ENCODE measurements at regions of chr6 and their contacts with region 1.

Region 1: GRCh38 chr6:160455541-160456213 is 107.5 kb downstream of the SLC22A3 start:
- DNase-seq: peak; percentile 67
- CTCF ChIP-seq: peak; percentile 93

Region 2: GRCh38 chr6:160088069-160088783 is 367.5 kb before region 1 on chr6:
- CTCF ChIA-PET with region 1: interaction called, 14 read pairs
- POLR2A ChIA-PET with region 1: no interaction called
- DNase-seq: no peak
- CTCF ChIP-seq: peak; percentile 34

Region 3: GRCh38 chr6:160137989-160138835 is 317.5 kb before region 1 on chr6:
- CTCF ChIA-PET with region 1: interaction called, 49 read pairs
- POLR2A ChIA-PET with region 1: no interaction called
- DNase-seq: peak; percentile 64
- CTCF ChIP-seq: peak; percentile 86

Region 4: DNA sequence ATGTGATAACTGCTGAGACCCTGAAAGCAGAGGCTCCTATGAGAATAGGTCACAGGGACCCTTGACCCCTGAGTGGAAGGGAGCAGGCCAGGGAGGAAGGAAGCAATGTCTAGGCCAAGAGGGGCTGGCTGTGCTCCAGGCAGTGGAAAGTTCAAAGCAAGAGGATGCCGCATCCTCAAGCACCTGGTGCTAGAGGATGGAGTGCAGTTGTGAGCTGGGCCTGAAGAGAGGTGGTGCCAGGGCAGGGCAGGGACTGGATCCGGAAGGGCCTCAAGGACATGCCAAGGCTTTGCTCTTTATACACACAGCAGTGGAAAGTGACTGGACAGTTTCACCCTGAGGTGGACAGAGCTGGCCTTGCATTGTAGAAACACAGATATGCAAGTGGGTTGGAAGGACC is 10.5 kb before region 1 on chr6:
- CTCF ChIA-PET with region 1: interaction called, 21 read pairs
- POLR2A ChIA-PET with region 1: no interaction called
- DNase-seq: no peak
- CTCF ChIP-seq: no peak

Measured in GM10248 (cell line).